ENCODE measurements at regions of chr20 and their contacts with region 1.

Region 1: DNA sequence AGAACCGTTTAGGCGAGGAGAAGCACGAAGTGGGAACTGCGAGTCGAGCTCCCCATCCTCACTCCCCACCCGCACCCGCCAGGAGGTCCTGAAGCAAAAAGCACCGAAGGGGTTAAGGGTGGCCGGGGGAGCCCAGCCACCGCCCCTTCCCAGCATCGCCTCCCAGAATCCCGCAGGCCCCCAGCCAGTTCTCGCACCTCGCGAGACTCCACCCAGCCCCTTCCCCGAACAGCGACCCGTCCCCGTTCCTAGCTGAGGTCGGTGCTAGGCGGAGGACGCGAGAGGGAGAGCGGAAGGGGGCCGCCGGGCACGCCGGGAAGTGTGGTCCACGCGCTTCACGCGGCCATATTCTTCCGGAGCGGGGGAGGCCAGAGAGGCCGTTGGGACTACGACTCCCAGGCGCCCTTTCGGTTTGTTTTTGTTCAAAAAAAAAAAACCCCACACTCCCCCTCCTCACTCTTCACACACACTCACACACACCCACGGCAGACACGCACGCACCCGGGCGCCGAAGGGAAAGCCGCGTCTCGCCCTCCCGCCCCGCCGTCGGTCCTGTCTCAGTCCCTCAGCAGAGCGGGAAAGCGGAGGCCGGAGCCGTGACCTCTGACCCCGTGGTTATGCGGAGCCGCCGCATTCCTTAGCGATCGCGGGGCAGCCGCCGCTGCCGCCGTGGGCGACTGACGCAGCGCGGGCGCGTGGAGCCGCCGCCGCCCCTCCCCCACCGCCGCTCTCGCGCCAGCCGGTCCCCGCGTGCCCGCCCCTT is at the start of gene ASXL1:
- DNase-seq: peak; percentile 97
- ATAC-seq: peak; percentile 85
- H3K4me3 Mint-ChIP-seq: peak within 1 kb of the TSS; percentile 96
- H3K27ac Mint-ChIP-seq: peak within 1 kb of the TSS; percentile 100
- H3K4me1 Mint-ChIP-seq: peaks cover 59% of the 10 kb centered on the region
- H3K27me3 Mint-ChIP-seq: no peaks in the 10 kb centered on the region
- CTCF ChIP-seq: no peak
- total RNA-seq, gene ASXL1: 129 to 137 TPM

Region 2: DNA sequence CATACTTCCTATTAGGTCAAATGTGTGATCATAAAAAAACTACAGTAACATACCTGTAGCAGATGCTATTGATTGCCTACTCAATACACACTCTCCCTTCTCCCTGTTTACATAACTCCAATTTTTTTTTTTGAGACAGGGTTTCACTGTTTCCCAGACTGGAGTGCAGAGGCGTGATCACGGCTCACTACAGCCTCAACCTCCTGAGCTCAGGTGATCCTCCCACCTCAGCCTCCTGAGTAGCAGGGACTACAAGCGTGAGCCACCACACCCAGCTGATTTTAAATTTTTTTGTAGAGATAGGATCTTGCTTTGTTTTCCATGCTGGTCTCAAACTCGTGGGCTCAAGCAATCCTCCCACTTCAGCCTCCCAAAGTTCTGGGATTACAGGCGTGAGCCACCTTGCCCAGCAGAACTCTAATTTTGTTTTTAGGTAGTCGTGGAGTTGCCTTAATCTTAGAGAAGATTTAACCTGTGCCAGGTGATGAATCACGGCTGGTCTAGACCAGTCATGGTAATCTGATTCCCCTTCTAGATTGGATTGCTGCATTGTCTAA is 94.6 kb before region 1 on chr20:
- CTCF ChIA-PET with region 1: no interaction called
- POLR2A ChIA-PET with region 1: no interaction called
- intact Hi-C with region 1: no loop called
- DNase-seq: no peak
- ATAC-seq: no peak
- H3K4me3 Mint-ChIP-seq: no peak overlapping the region
- H3K27ac Mint-ChIP-seq: no peak overlapping the region
- H3K4me1 Mint-ChIP-seq: no peaks in the 10 kb centered on the region
- H3K27me3 Mint-ChIP-seq: no peaks in the 10 kb centered on the region
- CTCF ChIP-seq: no peak

Region 3: DNA sequence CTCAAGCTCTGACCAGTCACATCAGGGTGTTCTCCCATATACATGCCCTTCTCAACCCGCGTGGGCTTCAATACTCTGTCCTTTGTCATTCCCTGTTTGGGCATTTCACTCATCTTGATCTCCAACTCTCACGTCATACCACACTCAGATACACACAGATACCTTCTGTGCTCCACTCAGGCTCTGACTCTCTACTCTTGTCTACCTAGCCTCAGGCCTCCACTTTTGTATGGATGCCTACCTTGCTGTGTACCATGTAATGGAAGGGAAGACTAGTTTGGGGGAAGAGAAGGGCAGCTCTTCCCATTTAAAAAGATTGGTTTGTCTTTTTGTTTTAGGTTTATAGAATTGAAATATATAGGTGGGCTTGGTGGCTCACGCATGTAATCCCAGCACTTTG is 48.7 kb after region 1 on chr20:
- CTCF ChIA-PET with region 1: interaction called, 3 read pairs
- POLR2A ChIA-PET with region 1: interaction called, 9 read pairs
- intact Hi-C with region 1: loop called (anchors 5 kb)
- DNase-seq: no peak
- ATAC-seq: no peak
- H3K4me3 Mint-ChIP-seq: no peak overlapping the region
- H3K27ac Mint-ChIP-seq: peak overlapping the region; percentile 91
- H3K4me1 Mint-ChIP-seq: peaks cover 41% of the 10 kb centered on the region
- H3K27me3 Mint-ChIP-seq: no peaks in the 10 kb centered on the region
- CTCF ChIP-seq: no peak

Measured in activated CD8-positive, alpha-beta T cell treated with anti-CD3 and anti-CD28 coated beads for 36 hours (primary cell).